Gastrocnemius medialis (tissue), 4 donors: ENCODE measurements at regions of chr14 and their contacts with region 1.

Region 1: DNA sequence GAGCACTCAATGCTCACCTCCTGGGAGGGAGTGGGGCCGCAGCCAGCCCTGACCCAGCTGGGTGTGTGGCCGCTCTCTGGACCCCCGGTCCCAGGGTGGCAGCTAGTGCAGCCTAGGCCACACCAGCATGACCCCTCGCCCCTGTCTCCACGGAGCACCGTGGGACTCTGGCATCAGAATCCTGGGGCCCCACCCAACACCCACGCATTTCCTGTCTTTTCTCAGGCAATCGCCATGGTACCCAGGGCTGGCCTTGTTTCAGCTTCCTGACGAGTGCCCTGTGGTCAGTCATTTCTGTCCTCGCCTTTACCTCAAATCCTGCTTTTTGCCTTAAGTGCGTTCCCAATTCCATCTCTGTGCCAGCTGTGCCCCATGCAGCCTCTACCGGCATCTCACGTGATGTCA is 15.9 kb downstream of the PACS2 start:
- DNase-seq: no peak
- ATAC-seq: no peak
- H3K4me3 ChIP-seq: no peak overlapping the region
- H3K27ac ChIP-seq: peak overlapping the region in 2 of 4 donors; percentile 90 to 94
- H3K4me1 ChIP-seq: peaks cover 81 to 88% of the 10 kb centered on the region in 2 donors
- H3K27me3 ChIP-seq: no peaks in the 10 kb centered on the region
- CTCF ChIP-seq: no peak
- POLR2A ChIP-seq: no peak

Region 2: DNA sequence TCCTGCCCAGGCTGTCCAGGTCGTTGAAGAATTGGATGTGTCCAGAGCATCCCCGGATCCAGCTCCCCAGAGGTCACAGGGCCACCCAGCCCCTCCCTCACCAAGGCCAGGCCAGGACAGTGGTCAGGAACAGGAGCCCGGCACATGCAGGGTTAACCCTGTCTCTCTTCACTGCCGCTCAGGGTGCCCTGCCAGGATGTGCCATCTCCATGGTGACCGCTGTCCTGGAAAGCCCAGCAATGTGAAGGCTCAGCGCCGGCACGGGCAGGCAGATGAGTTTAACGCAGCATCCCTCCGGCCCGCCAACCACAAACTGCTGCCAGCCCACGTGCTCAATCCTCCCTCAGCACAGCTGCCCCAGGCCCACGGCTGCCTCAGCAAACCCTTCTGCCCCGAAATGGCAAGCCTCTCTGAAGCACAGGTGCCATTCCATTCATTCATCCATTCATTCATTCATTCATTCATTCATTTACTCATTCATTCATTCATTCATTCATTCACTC is 730.3 kb before region 1 on chr14:
- in situ Hi-C with region 1: no loop called
- intact Hi-C with region 1: no loop called
- DNase-seq: no peak
- ATAC-seq: no peak
- H3K4me3 ChIP-seq: no peak overlapping the region
- H3K27ac ChIP-seq: no peak overlapping the region
- H3K4me1 ChIP-seq: no peaks in the 10 kb centered on the region
- H3K27me3 ChIP-seq: peaks cover 52 to 69% (median 55%) of the 10 kb centered on the region in 3 donors
- CTCF ChIP-seq: no peak
- POLR2A ChIP-seq: no peak

Region 3: DNA sequence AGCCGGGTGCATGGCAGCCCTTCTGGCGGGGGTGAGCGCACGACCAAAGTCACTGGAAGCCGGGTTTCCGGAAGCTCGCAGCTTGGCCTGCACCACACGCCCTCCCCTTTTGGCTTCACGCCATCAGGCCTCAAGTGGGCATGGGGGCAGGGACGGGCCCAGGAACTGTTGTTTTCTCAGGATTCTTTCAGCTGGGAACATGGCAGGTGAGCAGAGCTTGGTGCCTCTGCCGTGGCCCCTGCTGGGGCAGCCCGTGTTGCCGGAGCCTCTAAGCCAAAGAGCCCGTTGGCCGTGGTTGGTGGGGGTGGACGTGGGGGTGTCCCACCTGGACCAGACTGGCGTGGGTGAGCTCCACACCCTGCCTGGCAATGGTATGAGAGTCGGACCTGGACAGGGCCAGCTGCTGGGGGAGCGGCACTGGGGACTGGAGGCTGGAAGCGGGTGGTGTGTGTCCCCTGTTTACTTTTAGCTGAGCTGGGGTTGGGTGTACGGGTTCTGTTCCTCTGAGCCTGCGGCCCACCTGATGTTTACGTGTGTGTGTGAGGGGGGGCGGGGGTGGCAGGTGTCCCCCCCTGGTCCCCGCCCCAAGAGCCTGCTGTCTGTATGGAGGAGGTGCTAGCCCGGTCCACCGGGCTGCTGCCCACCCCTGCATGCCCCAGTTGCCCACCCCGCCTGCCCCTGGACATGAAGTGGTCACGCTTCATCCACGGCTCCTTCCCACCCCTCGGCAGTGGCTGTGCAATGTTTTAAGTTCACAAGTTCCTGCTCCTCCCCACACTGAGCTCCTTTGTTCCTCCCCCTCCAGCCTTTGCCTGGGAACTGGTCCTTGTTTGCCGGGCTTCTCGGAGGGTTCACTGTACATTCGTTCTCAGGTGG is 434.5 kb before region 1 on chr14:
- in situ Hi-C with region 1: no loop called
- intact Hi-C with region 1: no loop called
- DNase-seq: peak in 1 of 2 donors; percentile 12
- ATAC-seq: no peak
- H3K4me3 ChIP-seq: no peak overlapping the region
- H3K27ac ChIP-seq: no peak overlapping the region
- H3K4me1 ChIP-seq: no peaks in the 10 kb centered on the region
- H3K27me3 ChIP-seq: no peaks in the 10 kb centered on the region
- CTCF ChIP-seq: no peak
- POLR2A ChIP-seq: no peak

Region 4: DNA sequence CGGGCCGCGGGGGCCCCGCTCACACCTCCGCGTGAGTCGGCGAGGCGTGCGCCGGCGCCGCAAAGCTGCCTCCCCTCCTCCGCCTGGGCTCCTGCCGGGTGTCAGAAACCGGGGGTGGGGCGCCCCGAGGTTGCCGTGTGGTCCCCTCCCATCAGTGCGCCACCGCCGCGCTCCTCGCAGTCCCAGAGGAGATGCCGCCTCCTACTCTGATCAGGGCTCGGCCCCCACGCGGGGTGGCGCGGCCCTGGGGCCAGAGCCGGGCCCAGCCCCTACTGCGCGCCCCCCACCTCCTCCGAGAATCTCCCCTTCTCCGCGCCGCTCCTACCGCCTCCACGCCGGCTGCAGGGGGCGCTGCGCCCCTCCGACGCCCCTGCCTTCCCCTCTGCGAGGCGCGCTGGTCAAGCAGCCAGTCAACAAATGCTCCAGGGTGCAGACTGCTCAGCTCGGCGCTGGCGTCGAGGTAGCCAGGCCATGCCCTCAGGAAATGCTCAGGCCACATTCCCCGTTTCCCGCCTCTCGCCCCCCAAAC is 161.4 kb before region 1 on chr14:
- in situ Hi-C with region 1: no loop called
- intact Hi-C with region 1: loop called (anchors 5 kb)
- DNase-seq: no peak
- ATAC-seq: peak; percentile 5 to 13
- H3K4me3 ChIP-seq: peak overlapping the region; percentile 38 to 57 (median 44)
- H3K27ac ChIP-seq: peak overlapping the region; percentile 76 to 83 (median 80)
- H3K4me1 ChIP-seq: peaks cover 49 to 58% of the 10 kb centered on the region in 2 donors
- H3K27me3 ChIP-seq: no peaks in the 10 kb centered on the region
- CTCF ChIP-seq: peak in 4 of 5 experiments; percentile 44 to 60 (median 56)
- POLR2A ChIP-seq: peak in 1 of 2 donors; percentile 19

Region 5: DNA sequence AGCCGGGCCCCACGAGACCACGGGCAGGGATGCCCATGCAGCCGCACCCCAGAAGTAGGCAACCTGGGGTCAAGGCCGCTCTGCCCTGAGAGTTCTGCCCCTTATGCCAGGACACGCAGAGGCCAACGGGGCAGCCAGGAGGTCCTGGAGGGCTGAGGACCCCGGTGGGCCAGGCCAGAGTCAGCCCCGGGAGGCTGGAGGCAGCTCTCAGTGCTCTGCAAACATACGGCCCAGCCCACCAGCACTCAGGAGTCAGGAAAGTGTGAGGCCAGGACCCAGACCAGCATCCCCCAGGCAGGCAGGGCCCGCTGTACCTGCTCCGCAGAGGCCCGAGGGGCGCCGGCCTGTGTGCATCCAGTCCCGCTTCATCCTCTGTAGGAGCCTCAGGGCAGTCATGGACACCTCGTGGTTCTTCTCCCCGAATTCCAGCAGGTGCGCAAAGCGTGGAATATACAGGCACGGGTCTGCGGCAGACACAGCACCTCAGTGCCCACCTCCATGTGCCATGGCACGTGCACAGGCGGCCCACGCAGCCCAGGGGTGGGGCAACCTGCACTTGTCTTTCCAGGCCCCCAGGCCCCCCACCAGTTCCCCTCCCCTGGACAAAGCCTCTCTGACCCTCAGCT is 89.4 kb before region 1 on chr14:
- in situ Hi-C with region 1: no loop called
- intact Hi-C with region 1: no loop called
- DNase-seq: no peak
- ATAC-seq: no peak
- H3K4me3 ChIP-seq: no peak overlapping the region
- H3K27ac ChIP-seq: no peak overlapping the region
- H3K4me1 ChIP-seq: peaks cover 0 to 7% of the 10 kb centered on the region in 2 donors
- H3K27me3 ChIP-seq: no peaks in the 10 kb centered on the region
- CTCF ChIP-seq: no peak
- POLR2A ChIP-seq: no peak